Activated CD4-positive, alpha-beta T cell treated with anti-CD3 and anti-CD28 coated beads for 36 hours (primary cell): ENCODE measurements at regions of chr17 and their contacts with region 1.

Region 1: DNA sequence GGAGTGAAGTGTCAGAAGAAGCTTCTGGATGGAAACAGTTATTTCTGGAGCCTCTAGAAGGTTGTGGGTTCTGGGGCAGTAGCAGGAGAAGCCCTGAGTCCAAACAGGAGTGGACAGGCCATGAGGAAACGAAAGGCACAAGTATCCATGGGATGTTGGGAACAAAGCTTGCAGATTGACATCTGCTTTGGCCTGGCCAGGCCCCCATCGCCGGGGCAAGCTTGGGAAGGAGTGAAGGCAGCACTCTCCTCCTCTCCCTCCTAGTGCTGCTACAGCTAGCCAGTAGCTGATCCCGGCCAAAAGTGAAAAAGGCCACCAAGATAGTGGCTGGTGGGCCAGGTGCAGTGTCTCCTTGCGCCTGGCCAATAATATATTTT is 40.4 kb downstream of the B9D1 start:
- DNase-seq: no peak
- ATAC-seq: no peak
- H3K4me3 Mint-ChIP-seq: no peak overlapping the region
- H3K27ac Mint-ChIP-seq: no peak overlapping the region
- H3K4me1 Mint-ChIP-seq: no peaks in the 10 kb centered on the region
- H3K27me3 Mint-ChIP-seq: peaks cover 4% of the 10 kb centered on the region

Region 2: GRCh38 chr17:19260958-19261357 is 61.2 kb before region 1 on chr17:
- CTCF ChIA-PET with region 1: no interaction called
- POLR2A ChIA-PET with region 1: no interaction called
- intact Hi-C with region 1: no loop called
- DNase-seq: no peak
- ATAC-seq: no peak
- H3K4me3 Mint-ChIP-seq: no peak overlapping the region
- H3K27ac Mint-ChIP-seq: no peak overlapping the region
- H3K4me1 Mint-ChIP-seq: peaks cover 10% of the 10 kb centered on the region
- H3K27me3 Mint-ChIP-seq: peaks cover 9% of the 10 kb centered on the region

Region 3: GRCh38 chr17:19338031-19338990 is 16.2 kb after region 1 on chr17:
- CTCF ChIA-PET with region 1: interaction called, 15 read pairs
- POLR2A ChIA-PET with region 1: no interaction called
- intact Hi-C with region 1: no loop called
- DNase-seq: peak; percentile 81
- ATAC-seq: peak; percentile 89
- H3K4me3 Mint-ChIP-seq: no peak overlapping the region
- H3K27ac Mint-ChIP-seq: no peak overlapping the region
- H3K4me1 Mint-ChIP-seq: no peaks in the 10 kb centered on the region
- H3K27me3 Mint-ChIP-seq: peaks cover 16% of the 10 kb centered on the region